Vagina (tissue), 2 donors: ENCODE measurements at regions of chr3 and their contacts with region 1.

Region 1: GRCh38 chr3:99753268-99753975 is 64.2 kb upstream of the CMSS1 start:
- DNase-seq: no peak
- H3K4me3 ChIP-seq: no peak overlapping the region
- H3K27ac ChIP-seq: no peak overlapping the region
- H3K4me1 ChIP-seq: no peaks in the 10 kb centered on the region
- H3K27me3 ChIP-seq: no peaks in the 10 kb centered on the region
- CTCF ChIP-seq: peak in 2 of 3 experiments; percentile 35 to 45
- POLR2A ChIP-seq: no peak

Region 2: GRCh38 chr3:99023590-99024192 is 729.7 kb before region 1 on chr3:
- intact Hi-C with region 1: loop called (anchors 10 kb)
- DNase-seq: no peak
- H3K4me3 ChIP-seq: no peak overlapping the region
- H3K27ac ChIP-seq: no peak overlapping the region
- H3K4me1 ChIP-seq: no peaks in the 10 kb centered on the region
- H3K27me3 ChIP-seq: no peaks in the 10 kb centered on the region
- CTCF ChIP-seq: peak; percentile 37 to 68 (median 57)
- POLR2A ChIP-seq: no peak

Region 3: GRCh38 chr3:99551520-99551919 is 201.9 kb before region 1 on chr3:
- intact Hi-C with region 1: no loop called
- DNase-seq: no peak
- H3K4me3 ChIP-seq: no peak overlapping the region
- H3K27ac ChIP-seq: no peak overlapping the region
- H3K4me1 ChIP-seq: no peaks in the 10 kb centered on the region
- H3K27me3 ChIP-seq: no peaks in the 10 kb centered on the region
- CTCF ChIP-seq: no peak
- POLR2A ChIP-seq: no peak

Region 4: GRCh38 chr3:100210772-100211135 is 457.3 kb after region 1 on chr3:
- intact Hi-C with region 1: no loop called
- DNase-seq: no peak
- H3K4me3 ChIP-seq: no peak overlapping the region
- H3K27ac ChIP-seq: peak overlapping the region; percentile 56
- H3K4me1 ChIP-seq: peaks cover 23% of the 10 kb centered on the region
- H3K27me3 ChIP-seq: no peaks in the 10 kb centered on the region
- CTCF ChIP-seq: no peak
- POLR2A ChIP-seq: no peak

Region 5: DNA sequence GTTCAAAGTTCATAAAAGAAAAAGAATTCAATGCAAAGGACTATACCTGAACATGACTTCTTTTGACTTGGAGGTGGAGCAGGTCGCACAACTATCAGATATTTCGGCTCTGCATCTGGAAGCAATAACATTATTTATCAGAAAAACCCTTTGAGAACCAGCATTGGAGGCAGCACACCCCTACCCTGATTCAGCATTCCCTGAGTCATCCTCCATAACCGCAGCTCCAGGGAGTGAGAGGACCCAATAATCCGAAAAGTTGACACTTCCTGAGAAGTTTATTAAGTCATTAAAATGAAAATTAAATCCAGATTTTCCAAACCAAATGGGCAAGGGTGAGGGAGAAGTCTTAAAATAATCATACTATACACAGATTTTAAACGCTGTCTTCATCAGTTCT is 1149.2 kb after region 1 on chr3:
- intact Hi-C with region 1: no loop called
- DNase-seq: no peak
- H3K4me3 ChIP-seq: no peak overlapping the region
- H3K27ac ChIP-seq: no peak overlapping the region
- H3K4me1 ChIP-seq: peaks cover 18% of the 10 kb centered on the region
- H3K27me3 ChIP-seq: no peaks in the 10 kb centered on the region
- CTCF ChIP-seq: no peak
- POLR2A ChIP-seq: no peak